ENCODE measurements at regions of chr3 and their contacts with region 1.

Region 1: GRCh38 chr3:194941761-194942483 is 256.2 kb downstream of the FAM43A start:
- DNase-seq: no peak
- H3K4me3 ChIP-seq: no peak overlapping the region
- H3K27ac ChIP-seq: no peak overlapping the region
- H3K4me1 ChIP-seq: peaks cover 0 to 34% (median 15%) of the 10 kb centered on the region in 4 experiments
- H3K27me3 ChIP-seq: no peaks in the 10 kb centered on the region

Region 2: DNA sequence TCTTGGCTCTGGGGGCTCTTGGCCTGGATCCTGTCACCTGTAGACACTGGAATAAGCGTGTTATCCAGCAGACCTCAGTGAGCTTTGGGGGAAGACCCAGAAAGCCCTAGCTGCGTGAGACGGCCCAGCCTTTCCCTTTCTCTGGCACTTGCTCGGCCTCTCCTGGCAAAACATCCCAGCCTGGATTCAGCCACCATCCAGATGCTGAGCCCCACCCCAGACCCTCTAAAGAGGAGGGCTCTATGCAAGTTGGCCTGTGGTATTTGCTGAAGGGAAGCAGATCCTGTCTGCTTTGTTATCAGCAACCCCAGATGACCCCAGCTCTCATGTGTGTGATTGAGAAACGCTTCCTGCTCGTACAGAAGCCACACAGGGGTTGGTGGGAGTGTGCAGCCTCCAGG is 10.9 kb after region 1 on chr3:
- CTCF ChIA-PET with region 1: interaction called, 19 read pairs
- POLR2A ChIA-PET with region 1: no interaction called
- DNase-seq: peak; percentile 73 to 95 (median 91)
- H3K4me3 ChIP-seq: no peak overlapping the region
- H3K27ac ChIP-seq: no peak overlapping the region
- H3K4me1 ChIP-seq: peaks cover 0 to 22% (median 21%) of the 10 kb centered on the region in 4 experiments
- H3K27me3 ChIP-seq: no peaks in the 10 kb centered on the region

Region 3: GRCh38 chr3:194967151-194968117 is 25.5 kb after region 1 on chr3:
- CTCF ChIA-PET with region 1: no interaction called
- POLR2A ChIA-PET with region 1: no interaction called
- DNase-seq: no peak
- H3K4me3 ChIP-seq: no peak overlapping the region
- H3K27ac ChIP-seq: no peak overlapping the region
- H3K4me1 ChIP-seq: peaks cover 0 to 10% (median 0%) of the 10 kb centered on the region in 4 experiments
- H3K27me3 ChIP-seq: no peaks in the 10 kb centered on the region

Region 4: GRCh38 chr3:195094171-195094921 is 152.4 kb after region 1 on chr3:
- CTCF ChIA-PET with region 1: no interaction called
- POLR2A ChIA-PET with region 1: no interaction called
- DNase-seq: peak in 2 of 3 donors; percentile 57 to 73
- H3K4me3 ChIP-seq: peak overlapping the region in 2 of 7 experiments; percentile 32 to 59
- H3K27ac ChIP-seq: peak overlapping the region in 1 of 2 experiments; percentile 14
- H3K4me1 ChIP-seq: peaks cover 0 to 44% (median 25%) of the 10 kb centered on the region in 4 experiments
- H3K27me3 ChIP-seq: no peaks in the 10 kb centered on the region